ENCODE measurements at regions of chr14 and their contacts with region 1.

Region 1: GRCh38 chr14:54818201-54819133 is 84.2 kb downstream of the GCH1 start:
- DNase-seq: no peak
- ATAC-seq: peak in 1 of 2 experiments; percentile 56; a peak in 3 of 6 replicates
- H3K4me3 ChIP-seq: no peak overlapping the region
- H3K27ac ChIP-seq: no peak overlapping the region
- H3K4me1 ChIP-seq: no peaks in the 10 kb centered on the region
- CTCF ChIP-seq: no peak
- EP300 ChIP-seq: no peak
- POLR2A ChIP-seq: no peak
- RAD21 ChIP-seq: no peak

Region 2: DNA sequence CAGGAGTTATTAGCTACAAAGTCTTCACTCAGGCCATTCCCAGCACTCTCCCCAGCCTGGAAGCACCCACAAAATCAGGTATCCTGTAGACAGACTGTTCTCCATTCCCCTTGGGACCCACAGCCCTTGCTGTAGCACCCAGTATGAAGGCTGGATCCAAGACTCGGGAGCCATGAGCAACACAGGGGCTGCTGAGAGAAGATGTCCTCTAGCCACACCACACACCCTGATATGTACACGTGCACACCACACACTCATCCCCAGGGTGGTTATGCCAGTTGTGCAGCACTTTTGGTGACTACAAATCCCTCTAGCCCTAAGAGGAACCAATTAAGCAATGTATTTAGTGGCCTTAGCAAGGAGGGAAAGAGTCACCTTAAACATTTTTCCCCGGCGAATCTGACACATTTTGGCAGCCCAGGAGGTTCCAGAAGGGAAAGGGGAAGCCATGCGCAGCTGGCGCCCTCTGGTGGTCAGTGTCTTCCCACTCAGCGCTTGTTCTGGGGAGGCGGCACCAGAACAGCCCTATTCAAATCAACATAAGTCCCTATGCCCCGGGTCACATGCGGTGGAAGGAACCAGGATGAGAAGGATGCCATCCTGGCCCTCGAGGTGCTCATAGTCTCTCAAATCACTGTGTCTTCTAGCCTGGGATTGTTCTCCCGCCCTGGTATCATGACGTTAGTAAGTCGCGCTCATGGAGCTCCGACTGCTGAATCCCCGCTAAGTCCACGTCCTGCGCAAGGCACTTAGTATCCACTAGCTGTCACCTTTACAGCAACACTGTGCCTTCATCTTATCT is 12.7 kb before region 1 on chr14:
- CTCF ChIA-PET with region 1: interaction called, 98 read pairs
- POLR2A ChIA-PET with region 1: no interaction called
- DNase-seq: peak; percentile 82 to 86
- ATAC-seq: peak; percentile 90 to 96
- H3K4me3 ChIP-seq: no peak overlapping the region
- H3K27ac ChIP-seq: no peak overlapping the region
- H3K4me1 ChIP-seq: 0 out of 3 replicates have a peak, but pooled peaks cover 3% of the 10 kb centered on the region
- CTCF ChIP-seq: peak; percentile 95
- EP300 ChIP-seq: no peak
- POLR2A ChIP-seq: no peak
- RAD21 ChIP-seq: peak; percentile 88 to 90

Region 3: GRCh38 chr14:54829455-54830224 is 11.2 kb after region 1 on chr14:
- CTCF ChIA-PET with region 1: interaction called, 10 read pairs
- POLR2A ChIA-PET with region 1: no interaction called
- DNase-seq: no peak
- ATAC-seq: no peak
- H3K4me3 ChIP-seq: no peak overlapping the region
- H3K27ac ChIP-seq: no peak overlapping the region
- H3K4me1 ChIP-seq: no peaks in the 10 kb centered on the region
- CTCF ChIP-seq: no peak
- EP300 ChIP-seq: no peak
- POLR2A ChIP-seq: no peak
- RAD21 ChIP-seq: no peak

Region 4: GRCh38 chr14:55265197-55265596 is 446.7 kb after region 1 on chr14:
- CTCF ChIA-PET with region 1: no interaction called
- POLR2A ChIA-PET with region 1: interaction called, 10 read pairs
- DNase-seq: peak in 1 of 2 experiments; percentile 41
- ATAC-seq: no peak; a peak in 1 of 6 replicates
- H3K4me3 ChIP-seq: no peak overlapping the region
- H3K27ac ChIP-seq: no peak overlapping the region
- H3K4me1 ChIP-seq: no peaks in the 10 kb centered on the region
- CTCF ChIP-seq: no peak
- EP300 ChIP-seq: no peak
- POLR2A ChIP-seq: no peak
- RAD21 ChIP-seq: no peak